ENCODE measurements at regions of chr20 and their contacts with region 1.

Region 1: DNA sequence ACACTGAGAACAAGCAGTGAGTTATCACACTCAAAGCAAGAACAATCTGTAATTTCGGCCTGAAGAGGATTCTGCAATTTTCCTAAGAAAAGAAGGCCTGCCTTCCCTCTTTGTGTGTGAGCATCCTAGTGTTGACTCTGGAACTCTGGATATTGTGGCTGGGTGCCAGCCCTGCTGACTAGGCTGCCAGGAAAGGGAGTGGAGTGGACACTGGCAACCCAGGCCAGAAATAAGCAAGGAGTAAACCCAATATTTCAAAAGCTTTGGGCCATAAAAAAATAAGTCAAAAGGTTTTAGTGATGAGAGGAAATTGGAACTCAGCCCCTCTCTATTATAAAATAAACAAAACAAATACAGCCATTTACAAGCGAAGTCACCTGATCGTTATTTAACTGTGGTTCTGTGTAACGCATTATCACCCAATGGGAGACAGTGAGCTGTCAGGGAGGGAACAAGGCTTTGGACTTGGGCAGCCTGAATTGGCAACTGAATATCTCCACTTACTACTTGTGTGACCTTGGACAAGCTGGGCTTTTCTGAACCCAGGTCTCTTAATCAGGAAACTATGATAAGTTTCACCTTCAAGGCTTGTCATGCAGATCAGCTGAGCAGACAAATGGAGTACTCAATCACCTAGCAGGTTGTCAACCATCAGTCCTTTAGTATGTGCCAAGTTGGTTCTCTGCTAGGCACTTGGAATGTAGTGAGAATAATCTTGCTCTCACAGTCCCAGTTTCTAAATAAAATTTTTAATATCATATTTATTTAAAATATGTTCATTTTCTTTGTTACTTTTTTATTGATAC is 196.2 kb downstream of the PAX1 start:
- DNase-seq: peak; percentile 96
- H3K4me3 ChIP-seq: no peak overlapping the region
- H3K27ac ChIP-seq: peak overlapping the region in 3 of 4 donors; percentile 57 to 79 (median 72)
- H3K4me1 ChIP-seq: peaks cover 0 to 42% (median 19%) of the 10 kb centered on the region in 4 donors
- H3K27me3 ChIP-seq: no peaks in the 10 kb centered on the region
- CTCF ChIP-seq: no peak
- EP300 ChIP-seq: peak; percentile 51 to 81 (median 70)
- POLR2A ChIP-seq: no peak

Region 2: GRCh38 chr20:21182832-21183563 is 718.7 kb before region 1 on chr20:
- intact Hi-C with region 1: loop called (anchors 10 kb)
- DNase-seq: peak; percentile 80
- H3K4me3 ChIP-seq: no peak overlapping the region
- H3K27ac ChIP-seq: peak overlapping the region in 3 of 4 donors; percentile 81 to 86 (median 84)
- H3K4me1 ChIP-seq: peaks cover 0 to 67% (median 40%) of the 10 kb centered on the region in 4 donors
- H3K27me3 ChIP-seq: no peaks in the 10 kb centered on the region
- CTCF ChIP-seq: no peak
- EP300 ChIP-seq: peak; percentile 49 to 87 (median 66)
- POLR2A ChIP-seq: no peak

Region 3: GRCh38 chr20:21808863-21809664 is 92.6 kb before region 1 on chr20:
- intact Hi-C with region 1: loop called (anchors 2 kb)
- DNase-seq: no peak
- H3K4me3 ChIP-seq: no peak overlapping the region
- H3K27ac ChIP-seq: no peak overlapping the region
- H3K4me1 ChIP-seq: peaks cover 0 to 20% (median 8%) of the 10 kb centered on the region in 4 donors
- H3K27me3 ChIP-seq: peaks cover 0 to 14% (median 0%) of the 10 kb centered on the region in 3 donors
- CTCF ChIP-seq: peak; percentile 32 to 71 (median 54)
- EP300 ChIP-seq: no peak
- POLR2A ChIP-seq: no peak

Measured in sigmoid colon (tissue), 7 donors.